Right ventricle myocardium inferior (tissue), 1 donor: ENCODE measurements at regions of chr2 and their contacts with region 1.

Region 1: GRCh38 chr2:45650851-45651414 is 542 bp upstream of the PRKCE start:
- DNase-seq: peak; percentile 97
- ATAC-seq: peak; percentile 86

Region 2: GRCh38 chr2:45700407-45701041 is 49.6 kb after region 1 on chr2:
- intact Hi-C with region 1: loop called (anchors 10 kb)
- DNase-seq: no peak
- ATAC-seq: no peak

Region 3: DNA sequence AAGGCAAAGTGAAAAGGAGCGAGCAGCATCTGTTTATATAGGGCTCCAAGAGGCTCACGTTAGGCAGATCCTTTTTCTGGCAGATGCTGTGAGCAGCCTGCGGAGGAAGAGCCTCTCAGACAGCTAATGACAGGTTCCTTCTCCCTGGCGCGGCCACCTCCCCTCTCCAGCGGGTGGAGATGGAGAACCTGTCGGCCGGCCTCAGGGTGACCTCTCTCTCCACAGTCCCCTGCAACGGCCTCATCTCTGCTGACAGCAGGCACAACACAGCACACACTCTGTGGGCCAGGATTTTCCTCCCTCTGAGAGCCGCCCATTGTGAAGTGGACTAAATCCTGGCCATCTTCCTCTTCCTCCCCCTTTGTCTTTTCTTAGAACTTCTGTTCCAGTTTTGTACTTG is 120.3 kb after region 1 on chr2:
- intact Hi-C with region 1: loop called (anchors 2 kb)
- DNase-seq: peak; percentile 81
- ATAC-seq: peak; percentile 93

Region 4: DNA sequence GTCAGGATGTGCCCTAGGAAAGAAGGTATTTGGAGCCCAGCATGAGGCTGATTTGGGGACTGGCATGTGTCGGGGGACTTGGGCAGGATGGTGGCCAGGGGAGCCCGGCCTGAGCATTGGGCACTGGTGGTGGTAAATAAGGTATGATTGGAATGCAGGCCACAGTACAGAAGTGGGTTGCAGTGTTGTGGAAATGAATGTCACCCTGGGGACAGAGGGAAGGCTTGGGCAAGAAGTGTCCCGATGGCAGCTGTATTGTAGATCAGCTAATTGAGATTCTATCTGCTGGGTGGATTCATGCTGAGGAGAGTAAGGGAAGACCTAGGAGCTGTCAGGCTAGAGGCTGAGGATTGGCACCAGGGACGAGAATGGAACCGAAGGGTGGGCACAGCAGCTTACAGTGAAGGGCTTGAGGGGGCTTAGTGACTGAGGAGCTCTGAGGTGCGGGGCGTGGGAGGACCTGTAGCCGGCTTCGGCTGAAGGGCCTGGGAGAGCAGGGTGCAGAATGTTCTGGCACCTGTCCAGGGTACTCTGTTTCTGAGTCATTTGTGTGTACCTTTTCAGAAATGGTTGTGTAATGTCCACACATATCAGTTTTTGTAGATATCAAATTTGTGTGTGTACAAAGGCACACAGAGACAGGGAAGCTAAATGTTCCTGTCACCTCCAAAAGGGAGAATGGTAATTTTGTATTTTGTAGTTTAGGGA is 170.8 kb after region 1 on chr2:
- intact Hi-C with region 1: loop called (anchors 2 kb)
- DNase-seq: no peak
- ATAC-seq: peak; percentile 37

Region 5: DNA sequence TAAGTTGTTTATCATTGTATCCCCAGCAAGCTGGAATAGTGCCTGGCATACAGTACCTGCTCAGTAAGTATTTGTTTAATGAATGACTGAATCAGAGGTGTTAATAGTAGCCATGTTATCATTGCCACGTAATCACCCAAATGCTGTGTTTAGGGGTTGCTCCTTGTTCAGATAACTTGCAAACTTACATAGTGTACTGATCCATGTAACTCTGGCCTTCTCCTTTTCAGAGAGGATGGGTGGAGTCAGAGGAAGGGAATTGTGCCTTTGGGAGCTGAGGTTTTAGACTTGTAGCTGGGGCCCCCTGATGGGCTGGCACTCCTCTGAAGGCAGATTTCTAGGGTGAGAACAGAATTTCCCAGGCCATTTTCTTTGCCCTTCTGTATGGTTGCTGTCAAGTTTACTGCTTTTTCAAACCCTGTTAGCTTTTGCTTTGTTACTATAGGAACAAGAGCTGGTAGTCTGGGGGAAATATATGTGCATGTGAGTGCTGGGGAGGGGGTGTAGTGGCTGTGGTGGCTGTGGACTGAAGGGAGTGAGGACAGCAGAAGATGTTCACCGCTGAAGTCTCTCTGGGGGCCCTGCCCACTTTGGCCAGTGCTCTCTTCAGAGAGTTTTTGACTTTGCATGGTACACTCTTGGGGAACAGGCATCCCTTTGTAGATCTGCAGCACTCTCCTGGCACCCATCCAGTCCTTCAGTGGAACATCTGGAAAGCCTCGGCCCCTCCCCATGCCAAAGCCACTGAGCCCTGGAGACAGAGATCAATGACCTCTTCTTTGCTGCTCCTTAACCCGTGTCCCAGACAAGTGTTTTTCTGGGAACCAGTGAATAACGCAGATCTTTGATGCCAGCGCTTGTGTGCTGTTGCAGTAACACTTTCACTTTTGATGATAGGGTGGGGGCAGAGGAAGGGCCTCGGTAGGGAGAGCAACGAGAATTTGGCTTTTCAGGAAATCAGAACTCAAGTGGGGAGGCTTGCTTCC is 209.5 kb after region 1 on chr2:
- intact Hi-C with region 1: loop called (anchors 2 kb)
- DNase-seq: peak; percentile 73
- ATAC-seq: peak; percentile 85